ENCODE measurements at regions of chr19 and their contacts with region 1.

Region 1: GRCh38 chr19:3852614-3853254 is 16.1 kb downstream of the ZFR2 start:
- DNase-seq: peak; percentile 76 to 85
- H3K4me3 ChIP-seq: no peak overlapping the region
- H3K27ac ChIP-seq: no peak overlapping the region
- H3K4me1 ChIP-seq: 0 out of 2 replicates have a peak, but pooled peaks cover 6% of the 10 kb centered on the region
- H3K27me3 ChIP-seq: no peaks in the 10 kb centered on the region
- CTCF ChIP-seq: peak; percentile 69

Region 2: DNA sequence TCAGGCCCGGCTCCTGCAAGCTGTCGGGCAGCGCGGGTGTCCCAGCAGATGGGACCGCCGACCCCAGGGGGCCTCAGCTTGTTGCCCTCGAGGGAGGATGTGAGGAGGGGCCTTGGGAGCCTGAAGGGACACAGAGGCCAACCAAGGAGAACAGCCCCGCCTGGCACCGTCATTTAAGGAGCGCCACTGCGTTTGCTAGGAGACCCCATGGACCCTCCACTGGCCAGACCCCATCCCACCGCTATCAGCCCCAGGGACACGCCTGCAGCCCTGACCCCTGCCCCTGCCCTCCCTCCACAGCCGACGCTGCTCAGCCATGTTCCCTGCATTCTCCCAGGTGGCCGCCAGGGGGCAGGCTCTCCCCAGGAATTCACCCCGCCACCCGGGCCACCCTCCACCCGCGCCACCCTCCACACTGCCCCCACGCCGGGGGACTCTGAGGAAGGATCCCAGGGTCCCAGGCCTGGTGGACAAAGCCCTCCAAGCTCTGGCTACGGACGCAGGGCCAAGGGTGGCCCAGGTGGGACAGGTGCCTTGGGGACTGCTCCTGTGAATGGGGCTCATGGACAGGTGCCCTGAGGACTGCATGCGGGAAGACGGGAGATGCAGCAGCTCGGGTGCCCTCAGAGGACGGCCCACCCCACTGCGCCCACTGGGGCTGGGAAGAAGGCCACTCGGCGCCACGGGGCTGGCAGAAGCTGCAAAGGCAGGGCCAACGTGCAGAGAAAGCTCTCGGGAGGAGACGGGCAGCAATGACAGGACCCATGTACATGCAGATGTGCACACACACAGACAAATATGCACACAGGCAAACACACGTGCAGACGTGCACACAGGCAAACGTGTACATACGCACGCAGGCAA is 186.8 kb before region 1 on chr19:
- CTCF ChIA-PET with region 1: no interaction called
- POLR2A ChIA-PET with region 1: no interaction called
- intact Hi-C with region 1: loop called (anchors 1 kb)
- DNase-seq: peak in 1 of 2 experiments; percentile 53
- H3K4me3 ChIP-seq: no peak overlapping the region
- H3K27ac ChIP-seq: no peak overlapping the region
- H3K4me1 ChIP-seq: no peaks in the 10 kb centered on the region
- H3K27me3 ChIP-seq: no peaks in the 10 kb centered on the region
- CTCF ChIP-seq: peak; percentile 93

Region 3: DNA sequence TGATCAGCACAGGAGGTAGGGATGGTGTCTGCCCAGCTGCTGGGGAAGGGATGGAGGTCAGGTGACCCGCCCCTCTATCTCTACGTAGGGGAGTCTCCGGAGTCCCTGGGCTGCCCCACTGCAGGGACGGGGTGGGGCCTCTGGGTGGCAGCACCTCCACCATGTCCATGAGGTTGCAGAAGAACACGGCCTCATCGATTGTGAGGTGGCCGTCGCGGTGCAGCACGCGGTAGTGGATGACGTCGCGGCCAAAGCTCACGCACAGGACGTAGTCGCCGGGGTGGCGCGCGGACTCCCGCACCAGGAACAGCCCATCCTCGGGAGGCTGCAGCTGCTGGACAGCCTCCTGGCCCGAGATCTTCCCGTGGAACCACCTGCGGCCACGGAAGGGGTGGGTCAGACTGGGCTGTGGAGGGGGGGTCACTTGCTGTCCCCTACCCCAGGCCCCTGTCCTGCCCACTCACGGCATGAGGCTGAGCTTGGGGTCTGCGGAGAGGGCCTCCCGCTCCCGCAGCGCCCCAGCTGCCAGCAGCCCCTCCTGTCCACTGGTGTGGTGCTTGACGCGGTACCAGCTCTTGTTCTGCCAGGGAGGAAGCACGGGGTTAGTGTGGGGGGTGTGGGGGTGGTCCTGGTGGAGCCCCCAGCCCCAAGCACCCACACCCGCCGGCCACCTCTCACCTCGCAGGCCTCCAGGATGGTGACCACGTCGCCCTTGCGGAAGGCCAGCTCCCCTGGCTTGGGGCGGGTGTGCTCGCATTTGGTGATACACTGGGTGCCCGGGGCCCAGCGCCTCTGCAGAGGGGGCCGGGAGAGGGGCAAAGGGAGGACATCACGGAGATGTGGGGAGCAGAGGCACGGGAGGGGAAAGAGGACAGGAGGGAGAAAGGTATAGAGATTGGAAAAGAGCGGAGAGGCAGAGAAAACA is 68.8 kb before region 1 on chr19:
- CTCF ChIA-PET with region 1: no interaction called
- POLR2A ChIA-PET with region 1: no interaction called
- intact Hi-C with region 1: no loop called
- DNase-seq: no peak
- H3K4me3 ChIP-seq: no peak overlapping the region
- H3K27ac ChIP-seq: no peak overlapping the region
- H3K4me1 ChIP-seq: no peaks in the 10 kb centered on the region
- H3K27me3 ChIP-seq: no peaks in the 10 kb centered on the region
- CTCF ChIP-seq: peak; percentile 38; the same call in 1 of the 2 replicates

Region 4: DNA sequence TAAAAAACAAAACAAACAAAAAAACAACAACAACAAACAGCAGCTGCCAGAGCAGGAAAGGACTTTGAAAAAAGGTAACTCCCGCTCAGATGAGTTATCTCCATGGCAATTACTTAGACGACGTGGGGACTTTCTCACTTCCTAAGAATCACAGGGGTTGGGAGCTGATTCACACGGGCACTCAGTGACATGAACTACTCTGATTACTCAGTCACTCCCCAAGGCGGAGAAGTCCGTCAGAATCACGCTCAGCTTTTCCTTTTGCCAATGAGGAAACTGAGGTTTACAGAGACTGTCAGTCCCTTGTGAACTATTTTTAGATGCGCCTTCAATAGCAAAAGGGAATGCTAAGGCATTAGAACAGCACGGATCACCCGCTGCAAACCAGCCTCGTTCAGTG is 34.3 kb before region 1 on chr19:
- CTCF ChIA-PET with region 1: no interaction called
- POLR2A ChIA-PET with region 1: no interaction called
- intact Hi-C with region 1: no loop called
- DNase-seq: no peak
- H3K4me3 ChIP-seq: no peak overlapping the region
- H3K27ac ChIP-seq: no peak overlapping the region
- H3K4me1 ChIP-seq: no peaks in the 10 kb centered on the region
- H3K27me3 ChIP-seq: peaks cover 29% of the 10 kb centered on the region; the same call in 1 of the 2 replicates
- CTCF ChIP-seq: no peak

Region 5: GRCh38 chr19:3899531-3900292 is 47.0 kb after region 1 on chr19:
- CTCF ChIA-PET with region 1: no interaction called
- POLR2A ChIA-PET with region 1: no interaction called
- intact Hi-C with region 1: no loop called
- DNase-seq: no peak
- H3K4me3 ChIP-seq: no peak overlapping the region
- H3K27ac ChIP-seq: no peak overlapping the region
- H3K4me1 ChIP-seq: no peaks in the 10 kb centered on the region
- H3K27me3 ChIP-seq: peaks cover 30% of the 10 kb centered on the region
- CTCF ChIP-seq: no peak

Region 6: DNA sequence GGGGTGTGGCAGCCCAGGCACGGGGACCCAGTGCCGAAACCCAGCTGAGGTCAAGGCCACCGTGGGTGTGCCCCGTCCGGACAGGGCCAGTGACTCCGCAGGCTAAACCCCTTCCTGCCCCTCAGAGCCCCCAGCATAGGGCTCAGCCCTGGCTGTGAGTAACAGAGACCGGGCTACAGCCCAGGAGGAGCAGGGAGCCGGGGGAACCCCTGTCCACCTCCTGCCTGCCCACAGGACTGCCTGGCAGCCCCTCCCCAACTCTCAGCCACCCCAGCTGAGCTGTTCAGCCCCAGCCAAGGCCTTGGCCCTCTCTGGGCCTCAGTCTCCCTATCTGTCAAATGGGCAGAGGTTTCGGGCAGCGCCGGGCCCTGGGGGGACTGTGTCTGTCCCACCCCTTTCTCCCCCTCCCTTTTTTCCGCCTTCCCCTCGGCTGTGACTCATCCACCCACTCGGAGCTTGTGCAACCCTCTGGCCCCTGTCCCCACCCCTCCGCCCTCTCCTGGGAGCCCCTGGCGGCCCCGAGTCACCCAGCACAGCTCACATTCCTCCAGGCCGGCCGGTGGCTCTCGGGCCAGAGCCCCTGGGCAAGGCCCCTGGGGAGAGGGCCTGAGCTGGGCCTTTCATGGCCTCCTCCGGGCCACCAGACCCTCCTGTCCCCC is 205.4 kb after region 1 on chr19:
- CTCF ChIA-PET with region 1: no interaction called
- POLR2A ChIA-PET with region 1: interaction called, 14 read pairs
- intact Hi-C with region 1: no loop called
- DNase-seq: peak; percentile 76 to 85
- H3K4me3 ChIP-seq: peak overlapping the region; percentile 47; the same call in 1 of the 2 replicates
- H3K27ac ChIP-seq: peak overlapping the region; percentile 96
- H3K4me1 ChIP-seq: peaks cover 63% of the 10 kb centered on the region
- H3K27me3 ChIP-seq: no peaks in the 10 kb centered on the region
- CTCF ChIP-seq: no peak; the same call in 1 of the 2 replicates

Measured in PC-9 (cell line).